Right cardiac atrium (tissue), 5 donors: ENCODE measurements at regions of chr17 and their contacts with region 1.

Region 1: DNA sequence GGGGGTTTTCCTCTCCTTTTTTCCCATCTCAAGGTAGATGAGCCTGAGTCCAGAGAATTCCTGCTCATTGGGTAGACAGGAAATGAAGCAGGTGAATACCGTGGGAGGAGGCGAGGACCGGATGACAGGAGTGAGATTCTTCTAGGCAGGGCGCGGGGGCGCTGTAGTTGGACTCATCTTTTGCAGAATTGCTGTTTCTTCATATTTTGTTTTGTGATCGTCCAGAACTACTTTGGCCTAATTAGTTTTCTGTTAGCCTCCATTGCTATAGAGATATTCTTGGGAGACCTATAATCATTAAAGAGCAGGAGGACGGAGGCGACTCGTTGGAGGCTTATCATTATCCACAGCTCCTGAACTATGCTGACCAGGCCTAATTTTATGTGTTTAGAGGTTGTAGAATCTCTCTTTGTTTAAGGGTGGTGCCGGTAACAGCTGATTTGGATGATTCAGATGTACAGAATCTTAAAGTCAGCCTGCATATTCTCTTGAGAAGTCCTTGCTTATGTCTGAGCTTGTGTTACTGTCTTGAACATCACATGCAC is 650 bp downstream of the ATP6V0A1 start:
- DNase-seq: peak in 2 of 3 donors; percentile 31 to 76
- ATAC-seq: peak; percentile 36 to 48
- H3K4me3 ChIP-seq: peak overlapping the region; percentile 88
- H3K27ac ChIP-seq: peak overlapping the region; percentile 92
- H3K4me1 ChIP-seq: peaks cover 4% of the 10 kb centered on the region
- H3K27me3 ChIP-seq: no peaks in the 10 kb centered on the region

Region 2: DNA sequence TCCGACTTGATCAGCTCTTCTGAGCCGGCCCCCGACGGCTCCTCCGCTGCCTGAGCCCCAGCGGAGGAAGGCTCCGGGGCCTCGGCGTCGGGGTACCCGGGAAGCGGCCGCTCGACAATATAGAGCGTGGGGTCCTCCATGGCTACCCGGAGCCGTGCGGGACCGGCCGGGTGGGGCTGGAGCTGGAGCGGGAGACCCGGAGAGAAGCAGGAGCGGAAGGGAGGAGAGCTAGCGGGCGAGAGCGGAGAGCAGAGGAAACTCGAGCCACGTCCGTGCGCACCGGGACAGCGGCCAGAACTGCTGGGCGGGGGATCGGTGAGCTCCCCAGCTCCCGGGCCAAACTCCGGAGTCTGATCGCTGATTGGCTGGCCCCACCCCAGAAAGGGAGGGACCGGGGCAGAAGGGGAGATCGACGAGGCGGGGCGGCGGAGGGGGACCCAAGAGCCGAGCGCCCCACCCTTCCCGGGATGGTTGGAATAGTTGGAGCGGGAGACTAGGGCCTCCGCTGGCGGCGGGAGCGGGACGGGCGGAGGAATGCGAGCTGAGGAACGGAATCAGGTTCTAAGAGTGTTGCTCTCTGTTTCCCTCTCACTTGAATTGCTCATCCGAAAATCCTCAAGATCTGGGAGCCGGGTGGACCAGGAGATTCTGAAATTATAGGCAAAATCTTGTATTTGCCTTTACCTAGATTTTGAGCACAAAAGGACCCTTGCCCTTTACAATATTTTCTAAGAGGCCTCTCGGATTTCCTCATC is 36.2 kb before region 1 on chr17 and contains the start of gene CAVIN1:
- intact Hi-C with region 1: loop called in 2 of 4 experiments (anchors 5 kb)
- DNase-seq: peak; percentile 99 to 100 (median 100)
- ATAC-seq: peak; percentile 93 to 94
- H3K4me3 ChIP-seq: peak within 1 kb of the TSS; percentile 87
- H3K27ac ChIP-seq: peak within 1 kb of the TSS; percentile 90
- H3K4me1 ChIP-seq: peaks cover 10% of the 10 kb centered on the region
- H3K27me3 ChIP-seq: no peaks in the 10 kb centered on the region
- total RNA-seq, gene CAVIN1: 173 to 256 (median 203) TPM